ENCODE measurements at regions of chr1 and their contacts with region 1.

Region 1: DNA sequence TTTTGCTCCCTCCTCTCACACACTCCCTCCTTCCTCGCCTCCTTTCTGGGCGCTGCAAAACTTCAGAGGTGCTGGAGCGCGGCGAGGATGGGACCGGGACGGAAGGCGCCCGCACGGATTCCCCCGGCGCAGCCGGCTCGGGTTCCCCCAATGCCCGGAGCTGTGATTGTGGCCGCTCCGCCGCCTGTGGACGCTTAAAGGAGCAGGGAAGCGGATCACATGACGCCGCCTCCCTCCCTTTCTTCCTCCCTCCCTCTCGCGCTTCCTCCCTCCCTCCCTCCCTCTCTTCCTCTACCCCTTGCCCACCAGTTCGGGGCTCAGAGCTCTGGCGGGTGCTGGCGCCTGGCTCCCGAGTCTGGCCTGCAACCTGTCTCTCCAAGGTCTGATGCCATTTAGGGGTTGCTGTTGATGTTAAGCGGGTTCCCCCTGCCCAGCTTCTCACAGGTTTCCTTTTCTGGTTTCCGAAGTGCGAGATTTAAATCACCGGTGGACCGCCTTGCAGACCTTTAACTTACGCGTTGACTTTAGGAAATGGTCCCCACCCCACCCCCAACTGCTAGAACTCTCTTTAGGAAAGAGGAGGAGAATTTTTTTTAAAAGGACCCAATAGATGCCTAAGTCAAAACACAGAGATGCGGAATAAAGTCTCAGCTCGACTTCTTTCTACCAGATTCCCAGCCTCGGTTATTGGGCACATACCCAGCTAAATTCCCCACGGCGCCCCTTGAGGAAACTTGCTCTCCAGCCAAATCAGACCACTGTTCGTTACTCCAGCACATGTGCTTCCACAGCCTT is at the start of gene WLS:
- DNase-seq: peak; percentile 93
- H3K4me3 ChIP-seq: peak within 1 kb of the TSS; percentile 79 to 93 (median 84)
- H3K27ac ChIP-seq: peak within 1 kb of the TSS; percentile 94 to 97 (median 94)
- H3K4me1 ChIP-seq: peaks cover 0 to 36% (median 15%) of the 10 kb centered on the region in 4 donors
- H3K27me3 ChIP-seq: no peaks in the 10 kb centered on the region
- CTCF ChIP-seq: peak in 1 of 4 experiments; percentile 18
- EP300 ChIP-seq: no peak
- POLR2A ChIP-seq: peak; percentile 81 to 92
- total RNA-seq, gene WLS: 99.2 to 188 (median 134) TPM

Region 2: DNA sequence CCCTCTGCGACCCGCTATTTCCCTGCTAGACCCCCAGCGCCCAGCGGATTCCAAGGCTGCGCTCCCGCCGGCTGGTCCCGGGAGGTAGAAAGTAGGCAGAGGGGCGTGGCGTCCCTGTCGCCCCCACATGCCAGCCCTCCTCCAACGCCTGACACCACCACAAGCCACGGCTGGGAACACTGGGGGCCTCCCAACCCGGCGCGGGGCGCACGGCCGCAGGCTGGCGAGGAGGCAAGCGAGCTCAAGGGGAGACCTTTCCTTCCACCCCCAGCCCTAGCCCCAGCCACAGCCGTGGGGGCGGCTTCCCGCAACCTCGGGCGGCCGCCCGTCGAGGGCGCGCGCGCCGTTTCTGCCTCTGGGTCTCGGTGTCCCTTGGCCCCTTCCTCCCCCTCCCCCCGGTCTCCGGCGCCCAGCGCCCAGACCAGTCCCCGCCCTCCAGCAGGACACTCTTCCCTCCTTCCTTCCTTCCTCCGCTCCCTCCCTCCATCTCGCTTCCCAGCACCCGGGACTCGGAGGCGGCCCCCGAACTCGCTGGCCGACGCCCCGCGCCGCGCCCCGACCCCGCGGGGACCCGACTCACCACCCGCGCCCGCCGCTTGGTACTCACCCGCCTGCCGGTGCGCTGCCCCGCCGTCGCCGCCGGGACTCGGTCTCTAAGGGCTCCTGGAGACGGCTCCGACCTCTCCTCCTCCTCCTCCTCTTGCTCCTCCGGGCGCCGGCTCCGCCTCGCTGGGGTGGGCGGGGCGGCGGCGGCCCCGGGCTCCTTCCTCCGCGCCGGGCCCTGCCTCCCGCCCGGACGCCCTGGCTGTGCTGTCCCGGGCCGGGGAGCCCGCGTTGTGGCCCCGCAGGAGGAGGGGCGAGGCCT is 399.6 kb before region 1 on chr1 and contains the start of gene GNG12:
- intact Hi-C with region 1: loop called (anchors 5 kb)
- DNase-seq: peak; percentile 89
- H3K4me3 ChIP-seq: peak within 1 kb of the TSS; percentile 67 to 78 (median 72)
- H3K27ac ChIP-seq: peak within 1 kb of the TSS; percentile 81 to 92 (median 84)
- H3K4me1 ChIP-seq: peaks cover 0 to 32% (median 18%) of the 10 kb centered on the region in 4 donors
- H3K27me3 ChIP-seq: no peaks in the 10 kb centered on the region
- CTCF ChIP-seq: no peak
- EP300 ChIP-seq: no peak
- POLR2A ChIP-seq: no peak
- total RNA-seq, gene GNG12: 41.9 to 58.2 (median 46.7) TPM

Region 3: DNA sequence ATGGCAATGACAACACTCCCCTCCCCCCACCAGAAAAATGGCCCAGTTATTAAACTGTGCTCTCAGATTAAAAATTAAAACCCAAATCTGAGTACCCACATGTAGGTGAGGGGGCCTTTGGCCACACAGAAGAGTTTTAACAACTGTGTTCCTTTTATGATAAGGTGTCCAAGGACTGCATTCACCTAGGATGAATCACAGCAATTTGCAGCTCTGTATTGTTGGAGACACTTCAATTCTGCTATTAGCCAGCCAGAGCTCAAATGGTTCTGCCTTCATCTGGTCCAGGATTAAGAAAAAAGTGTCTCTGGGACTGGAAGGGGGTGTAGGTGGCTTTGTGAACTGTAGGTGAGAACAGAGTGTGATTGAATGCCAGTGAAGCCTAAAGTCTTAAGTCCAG is 138.8 kb before region 1 on chr1:
- intact Hi-C with region 1: no loop called
- DNase-seq: no peak
- H3K4me3 ChIP-seq: no peak overlapping the region
- H3K27ac ChIP-seq: no peak overlapping the region
- H3K4me1 ChIP-seq: no peaks in the 10 kb centered on the region
- H3K27me3 ChIP-seq: no peaks in the 10 kb centered on the region
- CTCF ChIP-seq: no peak
- EP300 ChIP-seq: no peak
- POLR2A ChIP-seq: no peak

Region 4: DNA sequence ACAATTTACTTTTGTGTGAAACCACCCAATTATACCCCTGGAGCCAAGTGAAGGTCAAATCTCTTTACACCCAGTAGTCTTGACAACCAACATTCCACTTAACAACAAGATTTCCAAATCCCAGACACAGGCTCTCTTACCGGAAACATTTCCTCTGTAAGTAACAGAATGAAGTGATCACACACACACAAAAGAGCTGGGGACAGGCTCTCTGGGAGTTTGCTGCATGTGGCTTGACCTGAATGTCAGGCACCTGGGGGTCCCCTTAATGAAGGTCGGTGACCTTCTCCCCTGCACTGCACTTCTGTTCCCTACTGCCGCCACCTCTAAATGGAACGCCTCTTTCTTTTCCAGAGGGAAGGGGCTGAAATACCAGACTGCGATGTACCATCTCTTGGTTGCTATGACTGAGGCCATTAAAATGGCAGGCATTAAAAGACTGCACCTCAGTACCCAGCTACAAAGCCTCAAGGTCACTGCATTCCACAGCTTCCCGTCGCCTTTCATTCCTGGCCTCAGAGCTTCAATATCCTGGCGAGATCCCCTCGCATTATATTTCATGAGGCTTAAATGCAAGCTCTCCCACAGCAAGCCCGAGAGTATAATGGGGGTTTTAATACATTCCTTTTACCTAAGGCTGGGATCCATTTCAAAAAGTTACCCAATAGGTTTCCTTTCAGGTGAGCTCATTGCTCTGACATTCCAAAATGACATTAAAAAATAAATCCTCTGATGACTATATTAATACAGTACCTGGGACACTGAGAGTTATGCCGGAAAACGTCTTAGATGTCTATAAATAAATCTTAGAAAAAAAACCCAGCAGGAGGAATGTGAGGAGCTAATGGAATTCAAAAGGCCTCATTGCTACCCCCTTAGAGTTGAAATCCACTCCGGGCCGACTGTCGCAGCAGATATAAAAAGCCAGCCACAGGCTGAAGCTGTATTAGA is 91.2 kb before region 1 on chr1:
- intact Hi-C with region 1: loop called (anchors 5 kb)
- DNase-seq: no peak
- H3K4me3 ChIP-seq: no peak overlapping the region
- H3K27ac ChIP-seq: peak overlapping the region; percentile 36 to 85 (median 78)
- H3K4me1 ChIP-seq: peaks cover 0 to 44% (median 36%) of the 10 kb centered on the region in 4 donors
- H3K27me3 ChIP-seq: no peaks in the 10 kb centered on the region
- CTCF ChIP-seq: no peak
- EP300 ChIP-seq: no peak
- POLR2A ChIP-seq: no peak

Region 5: DNA sequence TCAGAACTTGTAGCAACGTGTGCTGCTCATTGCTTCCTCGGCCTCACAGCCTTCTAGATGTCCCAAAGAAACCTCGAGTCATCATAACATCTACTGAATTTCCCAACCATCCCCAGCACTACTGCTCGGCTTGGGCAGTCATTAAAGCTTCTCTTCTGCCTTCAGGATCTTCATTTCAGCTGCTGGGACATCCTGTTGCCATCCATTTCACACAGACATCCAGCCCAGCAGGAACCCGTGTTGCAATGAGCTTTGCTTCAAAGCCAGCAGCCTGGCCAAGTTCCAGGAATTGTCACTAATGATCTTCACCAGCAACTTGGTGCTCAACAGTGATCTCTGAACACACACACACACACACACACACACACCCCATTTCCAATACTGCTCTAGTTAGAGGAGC is 18.7 kb before region 1 on chr1:
- intact Hi-C with region 1: loop called (anchors 1 kb)
- DNase-seq: peak; percentile 97
- H3K4me3 ChIP-seq: no peak overlapping the region
- H3K27ac ChIP-seq: peak overlapping the region; percentile 72 to 82 (median 77)
- H3K4me1 ChIP-seq: peaks cover 0 to 100% (median 91%) of the 10 kb centered on the region in 4 donors
- H3K27me3 ChIP-seq: no peaks in the 10 kb centered on the region
- CTCF ChIP-seq: no peak
- EP300 ChIP-seq: peak in 1 of 4 donors; percentile 51
- POLR2A ChIP-seq: no peak

Region 6: GRCh38 chr1:68346188-68346808 is 113.7 kb after region 1 on chr1:
- intact Hi-C with region 1: loop called (anchors 2 kb)
- DNase-seq: no peak
- H3K4me3 ChIP-seq: no peak overlapping the region
- H3K27ac ChIP-seq: no peak overlapping the region
- H3K4me1 ChIP-seq: peaks cover 0 to 8% (median 6%) of the 10 kb centered on the region in 4 donors
- H3K27me3 ChIP-seq: no peaks in the 10 kb centered on the region
- CTCF ChIP-seq: peak in 3 of 4 experiments; percentile 20 to 45 (median 28)
- EP300 ChIP-seq: no peak
- POLR2A ChIP-seq: no peak